ENCODE measurements at regions of chr11 and their contacts with region 1.

Region 1: GRCh38 chr11:67053896-67054842 is 2.5 kb upstream of the RHOD start:
- DNase-seq: peak; percentile 70
- H3K4me3 Mint-ChIP-seq: no peak overlapping the region
- H3K27ac Mint-ChIP-seq: peak overlapping the region; percentile 22
- H3K4me1 Mint-ChIP-seq: peaks cover 12% of the 10 kb centered on the region
- H3K27me3 Mint-ChIP-seq: peaks cover 85% of the 10 kb centered on the region

Region 2: GRCh38 chr11:67071420-67072284 is 17.5 kb after region 1 on chr11:
- CTCF ChIA-PET with region 1: interaction called, 48 read pairs
- DNase-seq: peak; percentile 84
- H3K4me3 Mint-ChIP-seq: no peak overlapping the region
- H3K27ac Mint-ChIP-seq: no peak overlapping the region
- H3K4me1 Mint-ChIP-seq: peaks cover 4% of the 10 kb centered on the region
- H3K27me3 Mint-ChIP-seq: peaks cover 42% of the 10 kb centered on the region

Measured in activated naive CD4-positive, alpha-beta T cell treated with anti-CD3 and anti-CD28 coated beads, Interleukin-2, amount 10 ng/mL, durations not matched to agents 7 days and 5 days (primary cell).